ENCODE measurements at regions of chr2 and their contacts with region 1.

Region 1: DNA sequence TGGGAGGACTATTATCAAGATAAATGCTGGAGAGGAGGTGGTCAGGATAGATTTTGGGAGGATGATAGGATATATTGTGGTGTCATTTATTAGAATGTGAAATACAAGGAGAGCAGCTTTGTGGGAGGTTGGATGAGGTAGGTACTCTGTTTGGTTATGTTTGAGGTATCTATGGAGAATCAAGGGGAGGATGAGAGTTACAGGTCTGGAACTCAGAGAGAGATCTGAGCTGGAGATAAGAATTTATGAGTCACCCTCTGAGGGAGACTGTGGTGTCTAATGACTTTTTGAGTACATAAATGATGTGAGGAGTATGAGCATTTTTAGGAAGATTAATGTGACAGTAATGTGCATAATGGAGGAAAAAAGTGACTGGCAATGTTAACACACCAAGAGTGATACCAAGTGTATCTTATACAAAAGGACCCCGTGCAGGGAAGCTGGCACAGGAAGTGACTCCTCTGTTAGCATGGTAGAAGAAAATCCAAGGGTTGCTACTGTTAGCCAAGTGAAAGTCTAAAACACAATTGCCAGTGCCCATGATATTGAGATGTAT is 48.2 kb downstream of the CRIM1 start:
- DNase-seq: no peak
- H3K4me3 ChIP-seq: no peak overlapping the region
- H3K4me3 Mint-ChIP-seq: no peak overlapping the region
- H3K27ac Mint-ChIP-seq: no peak overlapping the region
- H3K4me1 ChIP-seq: peaks cover 64% of the 10 kb centered on the region
- H3K4me1 Mint-ChIP-seq: no peaks in the 10 kb centered on the region
- H3K27me3 ChIP-seq: no peaks in the 10 kb centered on the region
- H3K27me3 Mint-ChIP-seq: no peaks in the 10 kb centered on the region
- CTCF ChIP-seq: no peak

Region 2: GRCh38 chr2:36322108-36322507 is 81.6 kb before region 1 on chr2:
- CTCF ChIA-PET with region 1: no interaction called
- POLR2A ChIA-PET with region 1: no interaction called
- intact Hi-C with region 1: no loop called
- DNase-seq: peak in 1 of 2 experiments; percentile 35
- H3K4me3 ChIP-seq: no peak overlapping the region
- H3K4me3 Mint-ChIP-seq: no peak overlapping the region
- H3K27ac Mint-ChIP-seq: no peak overlapping the region
- H3K4me1 ChIP-seq: no peaks in the 10 kb centered on the region
- H3K4me1 Mint-ChIP-seq: no peaks in the 10 kb centered on the region
- H3K27me3 ChIP-seq: no peaks in the 10 kb centered on the region
- H3K27me3 Mint-ChIP-seq: no peaks in the 10 kb centered on the region
- CTCF ChIP-seq: peak; percentile 43 to 67

Region 3: DNA sequence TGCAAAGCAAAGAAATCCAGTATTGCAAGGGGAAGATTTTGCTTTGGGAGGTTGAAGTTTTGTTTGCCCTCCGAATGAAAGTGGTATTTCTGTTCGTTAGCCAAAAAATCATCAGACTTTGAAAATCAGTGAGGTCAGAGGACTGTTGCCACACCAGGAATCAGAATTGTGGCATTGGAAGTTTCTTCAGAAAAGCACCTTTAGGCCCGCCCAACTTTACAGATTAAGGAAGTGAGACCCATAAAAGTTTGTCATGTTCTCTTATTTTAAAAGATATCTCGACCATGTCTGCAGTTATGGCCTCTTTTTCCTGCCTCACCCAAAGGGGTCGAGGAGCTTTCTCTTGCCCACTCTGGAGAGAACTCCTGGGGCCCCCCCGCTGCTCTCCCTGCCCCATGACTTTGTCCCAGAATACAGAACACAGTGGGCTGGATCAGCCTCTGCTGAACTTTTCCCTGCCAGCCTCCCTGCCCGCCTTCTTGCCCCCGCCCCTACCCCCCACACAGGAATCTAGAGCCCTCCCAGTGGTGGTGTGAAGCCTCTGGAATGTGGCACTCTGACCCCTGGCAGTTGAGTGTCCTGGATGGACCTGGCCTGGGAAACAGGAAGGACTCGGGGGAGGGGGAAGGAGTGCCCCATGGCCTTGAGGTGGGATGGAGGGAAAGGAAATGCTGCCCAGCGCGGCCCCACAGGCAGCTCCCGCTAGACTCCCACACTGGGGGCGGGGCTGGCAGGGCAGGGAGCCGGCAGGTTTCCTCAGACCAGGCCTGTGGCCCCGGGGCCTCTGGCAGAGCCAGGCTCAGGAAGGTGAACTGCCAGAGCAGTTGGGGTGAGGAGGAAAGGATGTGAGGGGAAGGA is 22.9 kb before region 1 on chr2:
- CTCF ChIA-PET with region 1: no interaction called
- POLR2A ChIA-PET with region 1: no interaction called
- intact Hi-C with region 1: loop called (anchors 2 kb)
- DNase-seq: peak; percentile 84 to 96
- H3K4me3 ChIP-seq: no peak overlapping the region
- H3K4me3 Mint-ChIP-seq: peak overlapping the region; percentile 6
- H3K27ac Mint-ChIP-seq: peak overlapping the region; percentile 88
- H3K4me1 ChIP-seq: peaks cover 86% of the 10 kb centered on the region
- H3K4me1 Mint-ChIP-seq: peaks cover 71% of the 10 kb centered on the region
- H3K27me3 ChIP-seq: no peaks in the 10 kb centered on the region
- H3K27me3 Mint-ChIP-seq: no peaks in the 10 kb centered on the region
- CTCF ChIP-seq: no peak

Region 4: GRCh38 chr2:36507408-36507812 is 103.7 kb after region 1 on chr2:
- CTCF ChIA-PET with region 1: no interaction called
- POLR2A ChIA-PET with region 1: no interaction called
- intact Hi-C with region 1: loop called (anchors 2 kb)
- DNase-seq: peak; percentile 70 to 79
- H3K4me3 ChIP-seq: no peak overlapping the region
- H3K4me3 Mint-ChIP-seq: no peak overlapping the region
- H3K27ac Mint-ChIP-seq: peak overlapping the region; percentile 79
- H3K4me1 ChIP-seq: peaks cover 33% of the 10 kb centered on the region
- H3K4me1 Mint-ChIP-seq: peaks cover 34% of the 10 kb centered on the region
- H3K27me3 ChIP-seq: no peaks in the 10 kb centered on the region
- H3K27me3 Mint-ChIP-seq: no peaks in the 10 kb centered on the region
- CTCF ChIP-seq: peak; percentile 56 to 89

Region 5: DNA sequence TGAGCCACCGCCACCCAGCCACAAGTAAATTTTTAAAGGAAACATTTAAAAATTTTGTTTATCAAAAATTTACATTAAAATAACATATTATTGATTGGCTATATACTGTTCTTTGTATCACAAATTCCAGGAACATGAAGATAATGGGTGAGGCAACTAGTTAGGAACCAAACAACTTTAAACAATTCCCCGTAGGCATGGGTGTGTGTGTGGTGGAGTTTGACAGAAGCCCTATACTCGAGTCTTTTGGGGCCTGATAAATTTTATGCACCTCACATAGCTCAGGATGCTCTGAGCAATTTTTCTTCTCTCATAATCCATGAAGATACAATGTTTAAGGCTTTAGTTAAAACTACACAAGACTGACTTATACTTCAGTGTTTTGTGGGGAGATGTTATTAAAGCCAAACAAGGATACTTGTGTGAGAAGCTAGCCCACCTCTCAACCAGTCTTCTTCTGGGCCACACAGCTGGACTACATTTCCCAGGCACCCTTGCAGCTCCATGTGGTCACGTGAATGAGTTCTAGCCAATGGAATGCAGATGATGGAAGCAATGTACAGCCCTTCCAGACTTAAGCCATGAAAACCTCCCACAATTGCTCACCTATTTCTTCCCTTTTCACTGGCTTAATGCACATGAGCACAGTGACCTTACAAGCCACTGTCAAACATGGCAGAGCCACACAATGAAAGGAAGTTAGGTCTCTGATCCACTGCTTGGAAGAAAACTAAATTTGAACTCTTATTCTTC is 214.5 kb after region 1 on chr2:
- CTCF ChIA-PET with region 1: no interaction called
- POLR2A ChIA-PET with region 1: no interaction called
- intact Hi-C with region 1: no loop called
- DNase-seq: peak; percentile 83 to 86
- H3K4me3 ChIP-seq: no peak overlapping the region
- H3K4me3 Mint-ChIP-seq: no peak overlapping the region
- H3K27ac Mint-ChIP-seq: peak overlapping the region; percentile 26
- H3K4me1 ChIP-seq: peaks cover 12% of the 10 kb centered on the region
- H3K4me1 Mint-ChIP-seq: peaks cover 24% of the 10 kb centered on the region
- H3K27me3 ChIP-seq: no peaks in the 10 kb centered on the region
- H3K27me3 Mint-ChIP-seq: no peaks in the 10 kb centered on the region
- CTCF ChIP-seq: no peak

Measured in Caco-2 (cell line).